PC-3 (cell line): ENCODE measurements at regions of chr14 and their contacts with region 1.

Region 1: DNA sequence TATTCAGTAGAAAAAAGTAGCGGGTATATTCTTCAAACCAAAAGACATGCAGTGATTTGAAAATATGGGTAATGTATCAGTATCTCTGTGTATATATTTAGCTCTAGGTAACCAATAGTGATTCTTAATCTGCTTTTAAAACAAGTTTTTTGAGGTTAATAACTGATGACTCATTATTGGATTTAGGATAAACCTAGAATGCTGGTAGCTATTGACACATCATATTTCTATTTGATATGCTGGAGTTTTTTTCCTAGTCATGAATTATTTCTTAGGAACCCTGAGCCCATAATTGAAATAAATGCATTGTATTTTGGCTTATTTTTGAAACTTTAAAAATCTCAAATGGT is 15.5 kb downstream of the ARF6 start:
- DNase-seq: peak; percentile 93
- ATAC-seq: peak; percentile 42
- H3K4me3 ChIP-seq: peak overlapping the region; percentile 33; the same call in 1 of the 2 replicates
- H3K27ac ChIP-seq: peak overlapping the region; percentile 85
- H3K4me1 ChIP-seq: peaks cover 59% of the 10 kb centered on the region
- H3K27me3 ChIP-seq: no peaks in the 10 kb centered on the region
- CTCF ChIP-seq: no peak

Region 2: GRCh38 chr14:49892636-49893308 is 15.6 kb before region 1 on chr14 and contains the start of gene ARF6:
- CTCF ChIA-PET with region 1: no interaction called
- POLR2A ChIA-PET with region 1: interaction called, 13 read pairs
- intact Hi-C with region 1: loop called (anchors 2 kb)
- DNase-seq: peak; percentile 99
- ATAC-seq: peak; percentile 81
- H3K4me3 ChIP-seq: peak within 1 kb of the TSS; percentile 91
- H3K27ac ChIP-seq: peak within 1 kb of the TSS; percentile 94
- H3K4me1 ChIP-seq: peaks cover 24% of the 10 kb centered on the region
- H3K27me3 ChIP-seq: no peaks in the 10 kb centered on the region
- CTCF ChIP-seq: no peak
- total RNA-seq, gene ARF6: 86.4 and 107 TPM in 2 replicates

Region 3: DNA sequence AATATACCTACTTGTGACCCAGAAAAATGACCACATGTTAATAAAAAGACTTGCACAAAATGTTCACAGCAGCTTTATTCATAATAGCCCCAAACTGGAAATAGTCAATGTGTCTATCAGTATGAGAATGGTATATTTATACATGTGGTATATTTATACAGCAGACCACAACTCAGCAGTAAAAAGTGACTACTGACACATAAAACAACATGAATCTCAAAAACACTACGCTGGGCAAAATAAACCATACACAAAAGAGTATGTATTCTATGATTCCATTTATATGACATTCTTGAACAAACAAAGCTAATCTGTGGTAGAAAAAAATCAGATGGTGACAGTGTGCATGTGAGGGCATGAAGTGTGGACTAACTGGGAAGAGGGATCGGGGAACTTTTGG is 19.6 kb after region 1 on chr14:
- CTCF ChIA-PET with region 1: no interaction called
- POLR2A ChIA-PET with region 1: interaction called, 4 read pairs
- intact Hi-C with region 1: loop called (anchors 1 kb)
- DNase-seq: peak; percentile 67
- ATAC-seq: peak; percentile 81
- H3K4me3 ChIP-seq: no peak overlapping the region
- H3K27ac ChIP-seq: peak overlapping the region; percentile 60
- H3K4me1 ChIP-seq: peaks cover 21% of the 10 kb centered on the region
- H3K27me3 ChIP-seq: no peaks in the 10 kb centered on the region
- CTCF ChIP-seq: no peak

Region 4: GRCh38 chr14:49959822-49960408 is 51.5 kb after region 1 on chr14:
- CTCF ChIA-PET with region 1: no interaction called
- POLR2A ChIA-PET with region 1: interaction called, 3 read pairs
- intact Hi-C with region 1: loop called (anchors 2 kb)
- DNase-seq: no peak
- ATAC-seq: no peak
- H3K4me3 ChIP-seq: no peak overlapping the region
- H3K27ac ChIP-seq: no peak overlapping the region
- H3K4me1 ChIP-seq: peaks cover 30% of the 10 kb centered on the region
- H3K27me3 ChIP-seq: no peaks in the 10 kb centered on the region
- CTCF ChIP-seq: no peak

Region 5: GRCh38 chr14:50045039-50045711 is 136.8 kb after region 1 on chr14:
- CTCF ChIA-PET with region 1: no interaction called
- POLR2A ChIA-PET with region 1: interaction called, 5 read pairs
- intact Hi-C with region 1: loop called (anchors 1 kb)
- DNase-seq: peak; percentile 97
- ATAC-seq: peak; percentile 89
- H3K4me3 ChIP-seq: no peak overlapping the region
- H3K27ac ChIP-seq: peak overlapping the region; percentile 97
- H3K4me1 ChIP-seq: peaks cover 59% of the 10 kb centered on the region
- H3K27me3 ChIP-seq: no peaks in the 10 kb centered on the region
- CTCF ChIP-seq: peak; percentile 31; the same call in 1 of the 2 replicates